Right cardiac atrium (tissue), 5 donors: ENCODE measurements at regions of chr6 and their contacts with region 1.

Region 1: DNA sequence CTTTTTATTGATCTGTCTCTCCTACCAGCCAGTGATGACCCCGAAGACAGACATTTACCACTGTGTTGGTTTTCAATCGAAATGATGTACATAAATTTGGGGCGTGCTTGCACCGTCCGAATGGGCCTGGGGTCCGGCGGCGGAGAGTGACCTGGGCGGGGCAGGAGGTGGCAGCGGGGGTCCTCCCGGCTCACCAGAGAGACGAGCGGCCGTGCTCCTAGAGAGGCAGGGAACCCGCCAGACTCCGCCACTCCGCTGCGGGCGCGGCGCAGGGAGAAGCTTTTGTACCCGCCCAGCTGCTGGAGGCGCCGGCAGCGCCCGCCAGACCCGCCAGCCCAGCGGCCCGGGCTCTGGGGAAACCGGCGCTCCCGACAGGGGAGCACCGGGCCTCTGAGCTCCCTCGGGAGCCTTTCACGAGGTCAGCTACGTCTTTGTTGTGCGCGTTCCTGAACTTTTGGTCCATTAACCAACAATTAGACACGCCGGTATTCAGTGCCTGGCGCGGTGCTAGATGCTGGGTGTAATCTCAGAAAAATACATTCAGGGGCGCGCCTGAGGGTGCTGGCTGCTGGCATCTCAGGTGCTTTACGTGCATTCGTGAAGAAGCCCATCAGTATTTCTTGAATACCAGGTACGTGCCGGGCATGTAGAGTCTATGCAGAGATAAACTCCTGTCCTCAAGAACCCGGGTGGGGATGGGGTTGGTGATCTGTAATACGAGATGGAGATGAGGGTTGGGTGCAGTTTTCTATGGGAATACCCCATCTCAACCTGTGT is at the start of gene PGBD1:
- DNase-seq: peak; percentile 88 to 94 (median 94)
- ATAC-seq: peak; percentile 97 to 98
- H3K4me3 ChIP-seq: peak within 1 kb of the TSS; percentile 97
- H3K27ac ChIP-seq: no peak within 1 kb of the TSS
- H3K4me1 ChIP-seq: no peaks in the 10 kb centered on the region
- H3K27me3 ChIP-seq: no peaks in the 10 kb centered on the region
- total RNA-seq, gene PGBD1: 3.0 to 3.6 (median 3.2) TPM

Region 2: GRCh38 chr6:28335564-28336283 is 54.2 kb after region 1 on chr6 and contains the start of gene ZSCAN31:
- intact Hi-C with region 1: no loop called
- DNase-seq: peak; percentile 96 to 97 (median 96)
- ATAC-seq: peak; percentile 98 to 99
- H3K4me3 ChIP-seq: peak within 1 kb of the TSS; percentile 46
- H3K27ac ChIP-seq: peak within 1 kb of the TSS; percentile 92
- H3K4me1 ChIP-seq: peaks cover 2% of the 10 kb centered on the region
- H3K27me3 ChIP-seq: no peaks in the 10 kb centered on the region
- total RNA-seq, gene ZSCAN31: 8.3 to 18.4 (median 10.2) TPM

Region 3: DNA sequence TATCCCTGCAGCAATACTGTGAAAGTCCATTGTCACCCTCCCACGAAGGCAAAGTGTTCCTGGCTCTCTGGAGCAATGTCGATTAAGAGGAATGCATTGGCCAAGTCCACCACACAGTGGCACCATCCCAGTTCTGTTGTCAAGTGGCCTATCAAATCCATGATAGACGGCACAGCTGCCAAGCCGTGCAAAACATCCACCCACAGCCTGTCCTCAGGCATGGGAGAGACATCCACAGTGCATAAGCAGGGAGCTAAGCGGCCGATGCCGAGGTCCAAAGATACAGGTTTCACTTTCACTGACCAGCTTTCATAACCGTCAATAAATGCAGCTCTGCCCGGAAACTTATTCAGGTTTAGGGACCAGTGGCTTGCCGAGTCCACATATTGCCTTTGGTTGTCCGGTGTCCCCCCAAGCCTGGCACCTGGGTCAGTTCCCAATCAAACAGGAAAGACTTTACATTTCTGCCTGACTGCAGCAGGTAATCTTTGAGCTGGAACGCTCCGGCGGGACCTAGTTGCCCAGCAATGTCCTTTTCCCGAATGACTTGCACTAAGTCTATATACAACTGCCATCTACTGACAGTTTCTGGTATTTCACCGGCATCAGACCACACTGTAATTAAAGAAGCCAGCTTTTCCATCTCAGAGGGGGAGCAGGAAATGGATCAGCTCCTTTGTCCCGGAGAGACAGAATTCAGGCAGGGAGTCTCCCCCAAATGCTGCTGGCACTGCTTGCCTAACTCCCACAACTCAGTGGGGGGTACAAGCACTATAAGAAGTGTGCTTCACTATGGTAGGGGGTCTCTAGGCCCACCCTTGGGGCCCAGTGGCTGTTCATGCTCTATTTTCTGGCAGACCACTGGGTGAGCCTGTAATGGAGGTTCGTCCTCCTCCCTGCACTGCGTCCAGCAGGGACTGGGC is 74.5 kb after region 1 on chr6:
- intact Hi-C with region 1: loop called in 2 of 4 experiments (anchors 5 to 10 kb)
- DNase-seq: peak; percentile 66 to 88 (median 84)
- ATAC-seq: peak; percentile 89 to 90
- H3K4me3 ChIP-seq: peak overlapping the region; percentile 67
- H3K27ac ChIP-seq: peak overlapping the region; percentile 81
- H3K4me1 ChIP-seq: peaks cover 6% of the 10 kb centered on the region
- H3K27me3 ChIP-seq: no peaks in the 10 kb centered on the region

Region 4: GRCh38 chr6:28537509-28538140 is 256.1 kb after region 1 on chr6:
- intact Hi-C with region 1: no loop called
- DNase-seq: no peak
- ATAC-seq: no peak
- H3K4me3 ChIP-seq: no peak overlapping the region
- H3K27ac ChIP-seq: no peak overlapping the region
- H3K4me1 ChIP-seq: no peaks in the 10 kb centered on the region
- H3K27me3 ChIP-seq: peaks cover 2% of the 10 kb centered on the region